ENCODE measurements at regions of chr3 and their contacts with region 1.

Region 1: GRCh38 chr3:58573640-58574039 is 3.6 kb downstream of the FAM107A start:
- DNase-seq: peak in 1 of 2 donors; percentile 71
- H3K4me3 ChIP-seq: peak overlapping the region in 1 of 4 donors; percentile 6
- H3K27ac ChIP-seq: peak overlapping the region in 2 of 5 donors; percentile 26 to 38
- H3K4me1 ChIP-seq: peaks cover 5 to 39% (median 19%) of the 10 kb centered on the region in 4 donors
- H3K27me3 ChIP-seq: no peaks in the 10 kb centered on the region
- CTCF ChIP-seq: no peak
- EP300 ChIP-seq: no peak
- POLR2A ChIP-seq: no peak

Region 2: GRCh38 chr3:58628823-58629562 is 55.4 kb after region 1 on chr3:
- intact Hi-C with region 1: loop called (anchors 5 kb)
- DNase-seq: peak in 1 of 2 donors; percentile 91
- H3K4me3 ChIP-seq: no peak overlapping the region
- H3K27ac ChIP-seq: peak overlapping the region; percentile 31 to 74 (median 68)
- H3K4me1 ChIP-seq: peaks cover 16 to 40% (median 35%) of the 10 kb centered on the region in 4 donors
- H3K27me3 ChIP-seq: no peaks in the 10 kb centered on the region
- CTCF ChIP-seq: no peak
- EP300 ChIP-seq: no peak
- POLR2A ChIP-seq: no peak

Measured in stomach (tissue), 19 donors.